A549 (cell line): ENCODE measurements at regions of chr16 and their contacts with region 1.

Region 1: DNA sequence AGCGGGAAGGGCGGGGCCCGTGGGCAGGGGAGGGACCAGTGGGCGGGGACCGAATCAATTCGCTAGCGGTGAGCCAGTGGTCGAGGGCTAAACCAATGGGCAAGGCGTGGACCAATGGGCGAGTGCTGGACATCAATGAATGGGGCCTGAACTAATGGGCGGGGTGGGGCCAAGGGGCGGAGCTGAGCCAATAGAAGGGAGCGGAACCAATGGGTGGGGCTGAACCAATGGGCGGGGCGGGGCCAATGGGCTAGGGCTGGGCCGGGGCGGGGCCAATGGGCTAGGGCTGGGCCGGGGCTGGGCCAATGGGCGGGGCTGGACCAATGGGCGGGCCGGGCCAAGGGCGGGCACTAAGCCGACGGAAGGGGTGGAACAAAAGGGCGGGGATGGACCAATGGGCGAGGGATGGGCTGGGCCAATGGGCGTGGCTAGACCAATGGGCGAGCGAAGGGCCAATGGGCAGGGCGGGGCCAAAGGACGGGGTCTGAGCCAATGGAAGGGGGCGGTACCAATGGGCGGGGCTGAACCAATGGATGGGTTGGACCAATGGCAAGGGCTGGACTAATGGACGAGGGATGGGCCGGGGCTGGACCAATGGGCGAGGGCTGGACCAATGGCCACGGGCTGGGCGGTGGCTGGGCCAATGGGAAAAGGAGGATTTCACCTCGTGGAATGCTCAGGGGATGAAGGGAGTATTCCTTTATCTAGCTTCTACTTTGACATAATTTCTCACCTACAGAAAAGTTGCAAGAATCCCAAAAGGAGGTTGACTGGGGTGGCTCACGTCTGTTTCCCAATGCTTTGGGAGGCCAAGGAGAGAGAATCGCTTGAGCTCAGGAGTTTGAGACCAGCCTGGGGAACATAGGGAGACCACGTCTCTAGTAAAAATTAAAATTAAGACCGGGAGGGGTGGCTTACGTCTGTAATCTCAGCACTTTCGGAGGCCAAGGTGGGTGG is 6.0 kb upstream of the FLYWCH1 start:
- DNase-seq: peak; percentile 98 to 100
- ATAC-seq: peak; percentile 80 to 88
- H3K4me3 ChIP-seq: peak overlapping the region; percentile 80; the same call in 2 of the 3 replicates
- H3K27ac ChIP-seq: peak overlapping the region in 1 of 2 experiments; percentile 98; a peak in 2 of 6 replicates
- H3K4me1 ChIP-seq: peaks cover 19% of the 10 kb centered on the region
- CTCF ChIP-seq: no peak
- EP300 ChIP-seq: no peak
- POLR2A ChIP-seq: no peak
- RAD21 ChIP-seq: no peak

Region 2: DNA sequence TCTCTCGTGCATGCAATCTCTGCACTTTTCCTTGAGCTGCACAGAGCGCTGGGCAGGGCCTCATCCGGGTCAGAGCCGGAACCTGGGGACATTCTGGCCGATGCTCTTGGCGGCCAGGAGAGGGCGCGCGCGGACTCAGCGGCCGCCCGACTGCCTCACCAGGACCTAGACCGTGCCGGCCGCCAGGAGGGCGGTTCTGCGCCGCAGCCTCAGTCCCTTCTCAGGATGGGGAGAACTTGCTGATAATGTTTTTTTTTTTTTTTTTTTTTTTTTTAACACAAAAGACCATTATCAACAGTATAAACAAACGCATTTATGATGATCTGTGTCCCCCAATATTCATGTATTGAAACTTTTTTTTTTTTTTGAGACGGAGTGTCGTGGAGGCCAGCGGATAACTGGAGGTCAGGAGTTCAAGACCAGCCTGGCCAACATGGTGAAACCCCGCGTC is 30.8 kb before region 1 on chr16:
- CTCF ChIA-PET with region 1: interaction called, 14 read pairs
- POLR2A ChIA-PET with region 1: interaction called, 11 read pairs
- DNase-seq: peak; percentile 59 to 87
- ATAC-seq: peak; percentile 99 to 100
- H3K4me3 ChIP-seq: no peak overlapping the region
- H3K27ac ChIP-seq: peak overlapping the region; percentile 51 to 77; a peak in 5 of 6 replicates
- H3K4me1 ChIP-seq: peaks cover 5% of the 10 kb centered on the region; the same call in 1 of the 3 replicates
- CTCF ChIP-seq: peak; percentile 91
- EP300 ChIP-seq: no peak
- POLR2A ChIP-seq: no peak
- RAD21 ChIP-seq: peak; percentile 68 to 71

Region 3: GRCh38 chr16:2883027-2883851 is 22.5 kb before region 1 on chr16 and contains the start of gene FLYWCH2:
- CTCF ChIA-PET with region 1: interaction called, 8 read pairs
- POLR2A ChIA-PET with region 1: interaction called, 62 read pairs
- DNase-seq: peak; percentile 83 to 97
- ATAC-seq: peak; percentile 80 to 86
- H3K4me3 ChIP-seq: peak within 1 kb of the TSS; percentile 94
- H3K27ac ChIP-seq: peak within 1 kb of the TSS; percentile 96 to 97
- H3K4me1 ChIP-seq: peaks cover 5% of the 10 kb centered on the region; the same call in 2 of the 3 replicates
- CTCF ChIP-seq: no peak
- EP300 ChIP-seq: no peak
- POLR2A ChIP-seq: peak; percentile 87
- RAD21 ChIP-seq: no peak
- polyA plus RNA-seq, gene FLYWCH2: 22.7 and 23.2 TPM in 2 replicates

Region 4: GRCh38 chr16:2919511-2920255 is 14.0 kb after region 1 on chr16:
- CTCF ChIA-PET with region 1: interaction called, 23 read pairs
- POLR2A ChIA-PET with region 1: interaction called, 10 read pairs
- DNase-seq: peak; percentile 61 to 73
- ATAC-seq: peak; percentile 69 to 71; a peak in 5 of 6 replicates
- H3K4me3 ChIP-seq: no peak overlapping the region
- H3K27ac ChIP-seq: no peak overlapping the region
- H3K4me1 ChIP-seq: peaks cover 13% of the 10 kb centered on the region
- CTCF ChIP-seq: peak; percentile 88
- EP300 ChIP-seq: no peak
- POLR2A ChIP-seq: no peak
- RAD21 ChIP-seq: peak; percentile 81